ENCODE measurements at regions of chr17 and their contacts with region 1.

Region 1: DNA sequence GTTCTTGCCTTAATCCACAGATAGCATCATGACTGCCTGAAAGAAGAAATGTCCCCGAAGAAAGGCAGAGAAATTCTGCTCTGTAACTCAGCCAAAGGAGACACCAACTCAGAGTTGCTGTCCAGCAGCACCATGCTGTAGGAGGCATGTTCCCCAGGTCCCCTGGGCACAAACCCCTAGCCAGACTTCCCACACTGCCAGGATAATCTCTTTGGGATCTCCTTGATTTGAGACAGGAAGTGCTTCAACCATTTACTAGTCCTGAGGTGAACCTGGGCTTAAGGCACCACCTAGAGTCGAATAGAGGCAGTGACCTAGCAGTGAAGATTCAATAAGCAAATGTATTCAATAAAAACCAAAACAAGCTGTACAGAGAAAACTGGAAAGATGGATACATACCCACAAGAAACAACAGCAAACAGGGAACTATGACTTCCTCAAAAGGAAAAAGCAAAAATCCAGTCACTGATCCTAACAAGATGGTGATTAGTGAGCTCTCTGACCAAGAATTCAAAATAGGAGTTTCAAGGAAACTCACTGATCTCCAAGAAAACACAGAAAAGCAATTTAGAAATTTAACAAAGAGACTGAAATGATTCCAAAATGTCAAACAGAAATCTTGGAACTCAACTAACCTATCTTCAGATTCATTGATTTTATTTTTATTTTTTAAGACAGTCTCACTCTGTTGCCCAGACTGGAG is 5.7 kb downstream of the OR4D2 start:
- DNase-seq: peak; percentile 69
- H3K4me3 Mint-ChIP-seq: no peak overlapping the region
- H3K27ac Mint-ChIP-seq: no peak overlapping the region
- H3K4me1 Mint-ChIP-seq: peaks cover 29% of the 10 kb centered on the region
- H3K27me3 Mint-ChIP-seq: peaks cover 14% of the 10 kb centered on the region

Region 2: DNA sequence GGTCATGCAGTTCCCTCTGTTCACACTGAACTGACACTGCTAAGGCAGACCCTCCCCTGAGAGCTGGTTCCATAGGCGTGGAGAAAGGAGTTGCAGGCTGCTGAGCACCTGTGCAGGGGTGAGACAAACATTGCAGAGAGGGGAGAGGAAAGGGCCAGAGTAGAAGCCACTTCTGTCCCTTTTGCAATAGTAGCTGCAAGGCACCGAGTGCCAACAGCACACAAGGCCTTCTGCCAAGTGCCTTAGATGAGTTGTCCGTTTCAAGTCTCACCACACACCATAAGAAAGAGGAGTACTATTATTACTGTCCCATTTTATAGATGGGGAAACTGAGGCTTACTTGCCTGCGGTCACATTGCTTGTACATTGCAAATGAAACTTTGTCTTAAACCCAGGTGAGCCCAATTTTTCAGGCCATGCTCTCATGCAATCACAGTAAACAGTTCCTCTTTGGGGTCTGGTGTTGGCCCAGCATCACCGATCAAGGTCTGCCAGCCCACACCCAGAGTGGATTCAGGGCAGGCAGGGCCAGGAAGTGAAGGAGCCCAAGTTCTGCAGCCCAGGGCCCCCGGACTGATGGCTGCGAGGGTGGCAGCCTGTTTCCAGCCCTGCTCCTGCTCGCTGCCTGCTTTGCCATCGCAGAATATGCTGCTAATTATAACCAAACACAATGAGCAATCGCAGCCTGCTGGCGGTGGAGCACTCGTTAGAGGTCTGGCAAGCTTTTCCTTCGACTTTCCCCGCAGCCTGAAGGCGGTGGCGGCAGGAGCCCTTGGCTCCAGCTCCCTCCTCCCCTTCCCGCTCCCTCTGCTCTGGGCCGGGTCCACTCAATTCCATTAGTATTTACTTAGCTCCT is 126.1 kb before region 1 on chr17:
- CTCF ChIA-PET with region 1: no interaction called
- POLR2A ChIA-PET with region 1: no interaction called
- DNase-seq: no peak
- H3K4me3 Mint-ChIP-seq: no peak overlapping the region
- H3K27ac Mint-ChIP-seq: no peak overlapping the region
- H3K4me1 Mint-ChIP-seq: no peaks in the 10 kb centered on the region
- H3K27me3 Mint-ChIP-seq: peaks cover 26% of the 10 kb centered on the region

Region 3: GRCh38 chr17:58112970-58113631 is 59.4 kb before region 1 on chr17:
- CTCF ChIA-PET with region 1: interaction called, 14 read pairs
- POLR2A ChIA-PET with region 1: no interaction called
- DNase-seq: peak; percentile 86
- H3K4me3 Mint-ChIP-seq: no peak overlapping the region
- H3K27ac Mint-ChIP-seq: no peak overlapping the region
- H3K4me1 Mint-ChIP-seq: no peaks in the 10 kb centered on the region
- H3K27me3 Mint-ChIP-seq: peaks cover 10% of the 10 kb centered on the region

Region 4: DNA sequence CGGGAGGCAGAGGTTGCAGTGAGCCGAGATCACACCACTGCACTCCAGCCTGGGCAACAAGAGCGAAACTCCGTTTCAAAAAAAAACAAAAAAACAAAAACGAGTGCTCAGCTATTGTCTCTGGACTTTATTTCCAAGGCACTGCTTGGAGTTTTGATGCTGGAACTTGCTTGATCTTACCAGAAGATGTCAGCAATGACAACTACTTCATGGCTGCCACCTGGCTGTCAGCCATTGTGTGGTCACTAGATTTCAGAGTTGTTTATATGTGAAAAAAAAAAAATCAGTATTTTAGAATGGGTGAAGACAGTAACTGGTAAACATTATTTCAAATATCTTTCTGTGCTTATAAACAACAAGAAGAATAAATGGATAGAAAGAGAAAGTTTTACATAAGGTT is 50.6 kb before region 1 on chr17:
- CTCF ChIA-PET with region 1: interaction called, 83 read pairs
- POLR2A ChIA-PET with region 1: interaction called, 4 read pairs
- DNase-seq: peak; percentile 46
- H3K4me3 Mint-ChIP-seq: no peak overlapping the region
- H3K27ac Mint-ChIP-seq: no peak overlapping the region
- H3K4me1 Mint-ChIP-seq: peaks cover 3% of the 10 kb centered on the region
- H3K27me3 Mint-ChIP-seq: peaks cover 27% of the 10 kb centered on the region

Region 5: GRCh38 chr17:58156839-58157803 is 15.4 kb before region 1 on chr17:
- CTCF ChIA-PET with region 1: interaction called, 41 read pairs
- POLR2A ChIA-PET with region 1: interaction called, 14 read pairs
- DNase-seq: peak; percentile 67
- H3K4me3 Mint-ChIP-seq: peak overlapping the region; percentile 77
- H3K27ac Mint-ChIP-seq: peak overlapping the region; percentile 65
- H3K4me1 Mint-ChIP-seq: peaks cover 63% of the 10 kb centered on the region
- H3K27me3 Mint-ChIP-seq: peaks cover 6% of the 10 kb centered on the region

Region 6: GRCh38 chr17:58200017-58200633 is 27.6 kb after region 1 on chr17:
- CTCF ChIA-PET with region 1: interaction called, 10 read pairs
- POLR2A ChIA-PET with region 1: no interaction called
- DNase-seq: peak; percentile 63
- H3K4me3 Mint-ChIP-seq: no peak overlapping the region
- H3K27ac Mint-ChIP-seq: no peak overlapping the region
- H3K4me1 Mint-ChIP-seq: no peaks in the 10 kb centered on the region
- H3K27me3 Mint-ChIP-seq: peaks cover 9% of the 10 kb centered on the region

Region 7: GRCh38 chr17:58242171-58242784 is 69.8 kb after region 1 on chr17:
- CTCF ChIA-PET with region 1: no interaction called
- POLR2A ChIA-PET with region 1: no interaction called
- DNase-seq: no peak
- H3K4me3 Mint-ChIP-seq: no peak overlapping the region
- H3K27ac Mint-ChIP-seq: no peak overlapping the region
- H3K4me1 Mint-ChIP-seq: peaks cover under 1% of the 10 kb centered on the region
- H3K27me3 Mint-ChIP-seq: peaks cover 56% of the 10 kb centered on the region

Region 8: GRCh38 chr17:58541249-58541648 is 368.7 kb after region 1 on chr17:
- CTCF ChIA-PET with region 1: no interaction called
- POLR2A ChIA-PET with region 1: no interaction called
- DNase-seq: no peak
- H3K4me3 Mint-ChIP-seq: no peak overlapping the region
- H3K27ac Mint-ChIP-seq: no peak overlapping the region
- H3K4me1 Mint-ChIP-seq: no peaks in the 10 kb centered on the region
- H3K27me3 Mint-ChIP-seq: peaks cover 11% of the 10 kb centered on the region

Measured in activated CD4-positive, alpha-beta memory T cell treated with anti-CD3 and anti-CD28 coated beads, Interleukin-2, amount 10 ng/mL, durations not matched to agents 7 days and 5 days (primary cell).